ENCODE measurements at regions of chr1 and their contacts with region 1.

Region 1: GRCh38 chr1:153617675-153618074 is 1.6 kb upstream of the S100A14 start:
- H3K4me3 Mint-ChIP-seq: no peak overlapping the region
- H3K27ac Mint-ChIP-seq: peak overlapping the region; percentile 36
- H3K4me1 Mint-ChIP-seq: peaks cover 35% of the 10 kb centered on the region
- H3K27me3 Mint-ChIP-seq: peaks cover 2% of the 10 kb centered on the region

Region 2: DNA sequence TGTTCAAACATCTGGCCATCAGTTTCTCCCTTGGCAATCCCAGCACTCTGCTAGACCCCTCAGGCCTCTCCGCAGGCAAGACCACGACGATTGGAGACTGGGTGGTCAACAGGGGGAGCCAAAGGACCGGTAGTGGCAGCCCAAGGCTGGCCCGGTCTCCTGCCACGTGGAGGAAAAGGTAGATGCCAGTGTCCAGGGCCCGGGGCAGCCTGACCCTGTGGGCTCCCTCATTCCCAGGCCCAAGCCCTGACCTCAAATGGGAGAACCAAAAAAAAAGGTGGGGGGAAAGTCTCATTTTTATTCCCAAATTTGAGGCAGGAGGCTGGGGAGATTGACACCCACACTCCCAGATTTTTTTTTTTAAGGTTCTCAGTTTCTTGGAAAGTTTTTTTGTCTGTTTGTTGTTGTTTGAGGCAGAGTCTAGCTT is 106.7 kb before region 1 on chr1:
- intact Hi-C with region 1: loop called (anchors 1 kb)
- H3K4me3 Mint-ChIP-seq: no peak overlapping the region
- H3K27ac Mint-ChIP-seq: no peak overlapping the region
- H3K4me1 Mint-ChIP-seq: peaks cover 42% of the 10 kb centered on the region
- H3K27me3 Mint-ChIP-seq: no peaks in the 10 kb centered on the region